ENCODE measurements at regions of chr22 and their contacts with region 1.

Region 1: DNA sequence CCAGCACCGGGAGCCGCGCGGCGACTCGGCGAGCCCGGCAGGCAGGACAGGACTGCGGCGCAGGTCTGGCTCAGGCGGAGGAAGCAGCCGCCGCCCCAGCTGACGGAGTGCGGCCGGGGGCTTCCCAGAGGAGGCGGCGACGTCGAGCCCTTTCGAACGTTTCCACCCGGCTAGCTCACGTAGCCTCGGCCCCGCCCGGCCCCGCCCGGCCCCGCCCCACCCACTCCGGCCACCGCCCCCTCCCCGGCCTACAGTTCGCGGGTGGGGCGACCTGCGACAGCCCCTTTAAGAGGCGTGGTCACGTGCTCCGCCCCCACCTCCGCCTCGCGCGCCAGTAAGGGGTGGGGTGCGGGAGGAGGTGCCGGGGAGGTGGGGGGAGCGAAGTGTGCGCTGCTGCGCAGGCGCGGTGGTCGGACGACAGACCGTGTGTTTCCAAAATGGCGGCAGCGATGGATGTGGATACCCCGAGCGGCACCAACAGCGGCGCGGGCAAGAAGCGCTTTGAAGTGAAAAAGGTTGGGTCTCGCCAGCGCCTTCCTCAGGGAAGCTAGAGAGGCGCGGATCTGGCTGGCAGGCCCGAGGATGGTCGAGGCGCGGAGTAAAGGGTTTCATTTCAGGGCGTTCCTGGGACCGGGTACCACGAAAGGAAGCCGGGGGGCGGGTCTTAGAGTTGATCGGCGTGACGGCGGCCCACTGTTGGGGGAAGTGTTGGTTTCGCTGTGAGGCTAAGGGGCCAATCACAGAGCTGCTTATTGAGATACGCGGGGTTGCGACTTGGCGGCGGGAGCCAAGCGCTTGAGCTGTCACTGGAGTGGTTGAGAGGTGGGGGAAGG is at the start of gene RBX1:
- DNase-seq: peak; percentile 99
- ATAC-seq: peak; percentile 83
- H3K4me3 Mint-ChIP-seq: peak within 1 kb of the TSS; percentile 100
- H3K27ac Mint-ChIP-seq: peak within 1 kb of the TSS; percentile 100
- H3K4me1 Mint-ChIP-seq: peaks cover 23% of the 10 kb centered on the region
- H3K27me3 Mint-ChIP-seq: no peaks in the 10 kb centered on the region
- total RNA-seq, gene RBX1: 49.9 to 96.6 TPM

Region 2: GRCh38 chr22:40818747-40819598 is 132.2 kb before region 1 on chr22 and contains the start of gene SLC25A17:
- CTCF ChIA-PET with region 1: no interaction called
- POLR2A ChIA-PET with region 1: interaction called, 8 read pairs
- intact Hi-C with region 1: loop called in 1 of 2 experiments (anchors 1 kb)
- DNase-seq: peak; percentile 93
- ATAC-seq: peak; percentile 93
- H3K4me3 Mint-ChIP-seq: peak within 1 kb of the TSS; percentile 88
- H3K27ac Mint-ChIP-seq: peak within 1 kb of the TSS; percentile 92
- H3K4me1 Mint-ChIP-seq: peaks cover 30% of the 10 kb centered on the region
- H3K27me3 Mint-ChIP-seq: no peaks in the 10 kb centered on the region
- total RNA-seq, gene SLC25A17: 23.3 to 29.7 TPM

Region 3: DNA sequence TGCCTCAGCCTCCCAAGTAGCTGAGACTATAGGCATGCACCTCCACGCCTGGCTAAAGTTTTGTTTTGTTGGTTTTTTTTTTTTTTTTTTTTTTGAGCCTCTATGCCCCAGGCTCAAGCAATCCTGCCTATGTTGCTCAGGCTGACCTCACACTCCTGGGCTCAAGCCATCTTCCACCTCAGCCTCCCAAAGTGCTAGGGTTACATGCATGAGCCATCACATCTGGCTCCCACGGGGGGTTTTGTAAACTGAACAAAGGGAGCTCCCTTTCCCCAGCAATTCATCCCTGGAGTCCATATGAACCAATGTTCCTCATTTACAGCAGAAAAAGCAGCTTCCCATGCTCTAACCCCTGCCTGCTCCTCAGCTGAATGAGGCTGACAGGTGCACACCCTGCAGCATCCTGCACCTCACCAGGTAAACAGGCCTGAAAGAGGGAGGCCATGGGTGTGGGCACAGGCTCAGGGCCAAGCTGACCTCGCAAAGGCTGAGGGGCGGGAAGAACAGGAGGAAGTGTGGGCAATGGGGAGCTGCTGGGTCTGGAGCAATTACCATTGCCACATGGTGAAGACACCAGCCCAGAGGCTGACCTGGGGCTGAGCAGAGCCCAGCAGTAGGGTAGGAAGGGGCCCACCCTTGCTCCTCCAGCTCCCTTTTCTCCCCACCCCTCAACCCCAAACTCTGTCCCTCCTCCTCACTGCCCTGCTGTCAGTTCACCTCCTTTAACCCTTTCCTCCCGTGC is 58.2 kb after region 1 on chr22:
- CTCF ChIA-PET with region 1: no interaction called
- POLR2A ChIA-PET with region 1: no interaction called
- intact Hi-C with region 1: no loop called
- DNase-seq: no peak
- ATAC-seq: no peak
- H3K4me3 Mint-ChIP-seq: no peak overlapping the region
- H3K27ac Mint-ChIP-seq: no peak overlapping the region
- H3K4me1 Mint-ChIP-seq: no peaks in the 10 kb centered on the region
- H3K27me3 Mint-ChIP-seq: peaks cover 4% of the 10 kb centered on the region

Region 4: DNA sequence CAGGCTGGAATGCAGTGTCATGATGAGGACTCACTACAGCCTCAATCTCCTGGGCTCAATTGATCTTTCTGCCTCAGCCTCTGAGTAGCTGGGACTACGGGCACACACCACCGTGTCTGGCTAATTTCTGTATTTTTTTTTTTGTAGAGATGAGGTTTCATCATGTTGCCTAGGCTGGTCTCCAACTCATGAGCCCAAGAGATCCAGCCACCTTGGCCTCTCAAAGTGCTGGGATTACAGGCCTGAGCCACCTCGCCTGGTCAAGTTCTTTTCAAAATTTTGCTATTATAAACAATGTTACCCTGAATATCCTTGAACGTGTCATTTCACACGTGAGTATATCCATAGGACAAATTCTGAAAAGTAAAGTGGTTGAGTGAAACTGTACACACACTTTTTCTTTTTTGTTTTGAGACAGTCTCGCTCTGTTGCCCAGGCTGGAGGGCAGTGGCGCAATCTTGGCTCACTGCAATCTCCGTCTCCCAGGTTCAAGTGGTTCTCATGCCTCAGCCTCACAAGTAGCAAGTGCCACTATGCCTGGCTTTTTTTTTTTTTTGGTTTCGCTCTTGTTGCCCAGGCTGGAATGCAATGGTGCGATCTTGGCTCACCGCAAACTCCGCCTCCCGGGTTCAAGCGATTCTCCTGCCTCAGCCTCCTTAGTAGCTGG is 119.6 kb after region 1 on chr22:
- CTCF ChIA-PET with region 1: no interaction called
- POLR2A ChIA-PET with region 1: no interaction called
- intact Hi-C with region 1: loop called in 1 of 2 experiments (anchors 1 kb)
- DNase-seq: no peak
- ATAC-seq: no peak
- H3K4me3 Mint-ChIP-seq: no peak overlapping the region
- H3K27ac Mint-ChIP-seq: no peak overlapping the region
- H3K4me1 Mint-ChIP-seq: peaks cover 10% of the 10 kb centered on the region
- H3K27me3 Mint-ChIP-seq: no peaks in the 10 kb centered on the region

Region 5: DNA sequence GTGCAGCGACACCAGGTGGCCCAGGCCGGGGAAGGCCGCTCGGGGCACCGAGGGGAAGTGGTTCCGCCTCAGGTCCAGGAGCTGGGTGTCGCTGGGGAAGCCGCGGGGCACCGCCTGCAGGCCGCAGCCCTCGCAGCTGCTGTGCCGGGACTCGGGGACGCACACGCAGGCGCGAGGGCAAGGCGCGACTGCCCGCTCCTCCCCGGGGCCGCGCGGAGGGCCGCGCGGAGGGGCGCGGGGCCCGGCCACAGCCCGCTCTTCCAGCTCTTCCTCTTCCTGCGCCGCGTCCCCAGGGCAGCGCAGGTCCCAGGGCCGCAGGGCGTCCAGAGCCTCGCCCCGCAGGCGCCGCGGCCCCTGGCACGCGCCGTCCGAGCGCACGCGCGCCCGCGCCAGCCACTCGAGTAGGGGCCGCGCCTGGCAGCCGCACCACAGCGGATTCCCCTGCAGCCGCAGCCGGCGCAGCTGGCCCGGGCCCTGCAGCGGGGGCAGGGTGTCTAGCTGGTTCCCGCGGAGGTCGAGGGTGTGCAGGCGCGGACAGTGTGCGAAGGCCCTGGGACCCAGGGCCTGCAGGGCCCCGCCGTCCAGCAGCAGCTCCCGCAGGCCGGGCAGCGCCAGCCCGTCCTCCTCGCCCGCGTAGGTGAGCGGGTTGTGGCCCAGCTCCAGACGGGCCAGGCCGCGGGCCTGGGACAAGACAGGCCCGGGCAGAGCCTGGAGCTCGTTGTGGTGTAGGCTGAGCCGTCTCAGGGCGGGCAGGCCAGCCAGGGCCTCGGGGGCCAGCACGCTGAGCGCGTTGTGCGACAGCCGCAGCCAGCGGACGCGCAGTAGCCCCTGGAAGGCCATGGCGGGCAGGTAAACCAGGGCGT is 286.8 kb after region 1 on chr22:
- CTCF ChIA-PET with region 1: no interaction called
- POLR2A ChIA-PET with region 1: interaction called, 7 read pairs
- intact Hi-C with region 1: loop called in 1 of 2 experiments (anchors 1 kb)
- DNase-seq: peak; percentile 91
- ATAC-seq: peak; percentile 98
- H3K4me3 Mint-ChIP-seq: peak overlapping the region; percentile 51
- H3K27ac Mint-ChIP-seq: no peak overlapping the region
- H3K4me1 Mint-ChIP-seq: peaks cover 7% of the 10 kb centered on the region
- H3K27me3 Mint-ChIP-seq: no peaks in the 10 kb centered on the region

Region 6: GRCh38 chr22:41448189-41448808 is 497.1 kb after region 1 on chr22:
- CTCF ChIA-PET with region 1: no interaction called
- POLR2A ChIA-PET with region 1: no interaction called
- intact Hi-C with region 1: loop called in 1 of 2 experiments (anchors 1 kb)
- DNase-seq: peak; percentile 95
- ATAC-seq: peak; percentile 73
- H3K4me3 Mint-ChIP-seq: peak overlapping the region; percentile 86
- H3K27ac Mint-ChIP-seq: peak overlapping the region; percentile 97
- H3K4me1 Mint-ChIP-seq: peaks cover 8% of the 10 kb centered on the region
- H3K27me3 Mint-ChIP-seq: no peaks in the 10 kb centered on the region

Region 7: DNA sequence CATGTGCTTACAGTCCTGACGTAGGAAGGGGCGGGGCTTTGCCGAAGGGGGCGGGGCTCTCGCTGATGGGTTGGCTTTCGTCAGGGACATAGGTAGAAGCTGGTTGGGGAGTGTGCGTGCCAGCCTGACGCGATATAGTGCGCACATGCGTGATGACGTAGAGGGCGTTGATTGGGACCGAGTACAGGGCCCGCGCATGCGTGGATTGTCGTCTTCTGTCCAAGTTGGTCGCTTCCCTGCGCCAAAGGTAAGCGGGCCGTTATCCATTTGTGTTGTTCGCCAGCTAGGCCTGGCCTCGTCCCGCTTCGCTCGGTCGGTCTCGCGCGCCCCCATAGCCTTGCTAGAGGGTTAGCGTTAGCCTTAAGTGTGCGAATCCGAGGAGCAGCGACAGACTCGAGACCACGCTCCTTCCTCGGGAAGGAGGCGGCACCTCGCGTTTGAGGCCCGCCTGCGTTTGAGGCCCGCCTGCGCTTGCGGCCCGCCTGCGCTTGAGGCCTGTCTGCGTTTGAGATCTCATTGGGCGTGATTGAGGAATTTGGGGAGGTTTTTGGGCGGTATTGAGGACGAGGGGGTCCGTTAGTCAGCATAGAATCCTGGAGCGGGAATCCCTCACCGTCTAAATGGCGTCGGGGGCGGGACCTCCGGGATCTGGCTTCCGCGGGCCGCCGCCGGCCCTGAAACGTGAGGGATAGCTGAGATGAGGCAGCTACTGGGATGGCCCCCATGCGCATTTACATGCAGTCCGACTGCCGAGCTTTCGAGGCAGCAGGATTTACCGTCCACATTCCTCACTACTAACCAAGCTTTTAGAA is 670.1 kb after region 1 on chr22 and contains the start of gene XRCC6:
- CTCF ChIA-PET with region 1: interaction called, 4 read pairs
- POLR2A ChIA-PET with region 1: interaction called, 3 read pairs
- intact Hi-C with region 1: loop called in 1 of 2 experiments (anchors 1 kb)
- DNase-seq: peak; percentile 100
- ATAC-seq: peak; percentile 91
- H3K4me3 Mint-ChIP-seq: peak within 1 kb of the TSS; percentile 98
- H3K27ac Mint-ChIP-seq: peak within 1 kb of the TSS; percentile 99
- H3K4me1 Mint-ChIP-seq: peaks cover 48% of the 10 kb centered on the region
- H3K27me3 Mint-ChIP-seq: no peaks in the 10 kb centered on the region
- total RNA-seq, gene XRCC6: 427 to 469 TPM